CD14-positive monocyte (primary cell): ENCODE measurements at regions of chr10 and their contacts with region 1.

Region 1: GRCh38 chr10:43013065-43013464 is 63.8 kb upstream of the RET start:
- DNase-seq: no peak
- H3K4me3 ChIP-seq: no peak overlapping the region
- H3K4me3 Mint-ChIP-seq: no peak overlapping the region
- H3K27ac ChIP-seq: no peak overlapping the region
- H3K27ac Mint-ChIP-seq: no peak overlapping the region
- H3K4me1 ChIP-seq: no peaks in the 10 kb centered on the region
- H3K4me1 Mint-ChIP-seq: peaks cover 12% of the 10 kb centered on the region
- H3K27me3 ChIP-seq: no peaks in the 10 kb centered on the region
- H3K27me3 Mint-ChIP-seq: peaks cover 0 to under 1% (median 0%) of the 10 kb centered on the region in 3 donors
- CTCF ChIP-seq: no peak

Region 2: DNA sequence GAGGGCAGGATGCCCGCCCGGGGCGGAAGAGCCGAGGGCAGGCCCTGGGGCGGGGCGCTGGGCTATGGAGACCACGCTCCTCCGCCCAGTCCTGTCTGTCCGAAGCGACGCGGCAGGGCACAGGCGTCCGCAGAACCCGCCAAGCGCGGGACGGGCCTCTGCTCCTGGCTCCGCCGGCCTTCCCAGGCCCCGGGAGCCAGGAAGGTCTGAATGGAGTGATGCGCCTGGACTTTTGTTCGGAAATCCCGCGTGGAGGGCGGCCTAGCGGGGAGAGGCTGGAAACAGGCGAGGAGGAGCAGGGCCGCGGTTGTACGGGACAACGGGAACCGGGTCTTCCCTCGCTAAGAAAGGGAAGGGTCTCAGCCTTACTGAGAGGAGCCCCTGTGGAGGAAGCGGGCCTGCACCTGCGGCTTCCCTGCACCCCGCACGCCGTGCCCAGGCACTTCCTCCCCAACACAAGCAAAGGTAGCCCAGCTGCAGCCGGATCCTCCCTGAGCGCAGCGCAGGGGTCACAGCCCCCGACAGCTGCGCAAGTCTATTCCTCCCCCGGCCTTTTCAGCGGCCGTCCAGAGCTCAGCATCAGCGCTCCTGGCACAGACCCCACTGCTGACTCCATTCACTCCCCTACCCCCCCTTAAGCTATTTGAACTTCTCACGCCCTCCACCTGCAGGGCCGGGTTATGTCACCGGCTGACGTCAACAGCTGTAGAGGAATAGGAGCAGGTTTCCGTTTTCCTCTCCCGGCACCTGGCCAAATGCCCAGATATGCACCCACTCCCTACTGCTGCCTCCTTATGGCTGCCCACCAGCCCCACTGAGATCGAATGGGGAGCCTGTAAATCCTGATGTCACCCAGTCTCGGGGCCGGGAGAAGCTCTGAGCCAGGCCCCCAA is 79.4 kb before region 1 on chr10:
- intact Hi-C with region 1: loop called in 1 of 2 experiments (anchors 10 kb)
- DNase-seq: peak in 1 of 3 donors; percentile 3
- H3K4me3 ChIP-seq: peak overlapping the region in 2 of 3 experiments; percentile 7 to 73
- H3K4me3 Mint-ChIP-seq: peak overlapping the region; percentile 86 to 95
- H3K27ac ChIP-seq: no peak overlapping the region
- H3K27ac Mint-ChIP-seq: no peak overlapping the region
- H3K4me1 ChIP-seq: peaks cover 12 to 27% of the 10 kb centered on the region in 2 donors
- H3K4me1 Mint-ChIP-seq: peaks cover 25% of the 10 kb centered on the region
- H3K27me3 ChIP-seq: peaks cover 0 to 29% of the 10 kb centered on the region in 2 donors
- H3K27me3 Mint-ChIP-seq: peaks cover 28 to 39% (median 29%) of the 10 kb centered on the region in 3 donors
- CTCF ChIP-seq: no peak